ENCODE measurements at regions of chr2 and their contacts with region 1.

Region 1: GRCh38 chr2:8681786-8682692 is at the start of gene ID2:
- DNase-seq: peak; percentile 99
- H3K4me3 Mint-ChIP-seq: peak within 1 kb of the TSS; percentile 75
- H3K27ac Mint-ChIP-seq: no peak within 1 kb of the TSS
- H3K4me1 Mint-ChIP-seq: peaks cover 28% of the 10 kb centered on the region
- H3K27me3 Mint-ChIP-seq: peaks cover under 1% of the 10 kb centered on the region
- CTCF ChIP-seq: no peak
- total RNA-seq, gene ID2: 0.54 and 2.0 TPM in 2 replicates

Region 2: GRCh38 chr2:7118606-7119503 is 1563.2 kb before region 1 on chr2:
- CTCF ChIA-PET with region 1: no interaction called
- POLR2A ChIA-PET with region 1: no interaction called
- intact Hi-C with region 1: loop called (anchors 1 kb)
- DNase-seq: peak; percentile 40
- H3K4me3 Mint-ChIP-seq: no peak overlapping the region
- H3K27ac Mint-ChIP-seq: no peak overlapping the region
- H3K4me1 Mint-ChIP-seq: no peaks in the 10 kb centered on the region
- H3K27me3 Mint-ChIP-seq: peaks cover 41% of the 10 kb centered on the region
- CTCF ChIP-seq: peak; percentile 38

Region 3: GRCh38 chr2:7427293-7428060 is 1254.6 kb before region 1 on chr2:
- CTCF ChIA-PET with region 1: interaction called, 23 read pairs
- POLR2A ChIA-PET with region 1: interaction called, 11 read pairs
- intact Hi-C with region 1: loop called (anchors 1 kb)
- DNase-seq: peak; percentile 70
- H3K4me3 Mint-ChIP-seq: no peak overlapping the region
- H3K27ac Mint-ChIP-seq: no peak overlapping the region
- H3K4me1 Mint-ChIP-seq: no peaks in the 10 kb centered on the region
- H3K27me3 Mint-ChIP-seq: peaks cover 31% of the 10 kb centered on the region
- CTCF ChIP-seq: peak; percentile 70

Region 4: DNA sequence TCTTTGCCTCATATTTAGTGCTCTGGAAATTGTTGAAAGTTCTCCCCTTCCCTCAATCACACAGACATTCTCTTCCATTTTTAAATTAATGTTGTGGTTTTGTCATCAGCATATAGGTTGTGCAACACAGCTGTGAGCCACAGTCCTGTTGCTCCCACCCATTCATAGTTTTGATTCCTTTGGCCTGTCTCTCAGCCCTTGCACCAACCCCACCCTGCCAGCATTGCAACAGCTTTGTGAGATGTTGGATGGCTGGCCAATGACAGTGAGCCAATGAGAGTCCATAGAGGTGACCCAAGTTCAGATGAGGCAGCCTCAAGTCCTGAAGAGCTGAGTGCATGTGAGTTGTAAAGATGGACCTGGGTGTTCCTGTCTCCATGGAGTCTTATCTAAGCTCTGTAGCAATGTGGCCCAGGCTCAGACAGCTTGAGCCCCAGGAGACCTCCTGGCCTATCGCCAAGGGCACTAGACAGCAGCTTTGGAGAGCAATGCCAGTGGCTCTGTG is 989.3 kb before region 1 on chr2:
- CTCF ChIA-PET with region 1: no interaction called
- POLR2A ChIA-PET with region 1: interaction called, 4 read pairs
- intact Hi-C with region 1: loop called (anchors 10 kb)
- DNase-seq: peak; percentile 88
- H3K4me3 Mint-ChIP-seq: no peak overlapping the region
- H3K27ac Mint-ChIP-seq: peak overlapping the region; percentile 50
- H3K4me1 Mint-ChIP-seq: peaks cover 29% of the 10 kb centered on the region
- H3K27me3 Mint-ChIP-seq: no peaks in the 10 kb centered on the region
- CTCF ChIP-seq: no peak